ENCODE measurements at regions of chr1 and their contacts with region 1.

Region 1: GRCh38 chr1:156500797-156501499 is 373 bp upstream of the MEF2D start:
- DNase-seq: peak; percentile 93
- H3K4me3 Mint-ChIP-seq: peak overlapping the region; percentile 89
- H3K27ac Mint-ChIP-seq: peak overlapping the region; percentile 97
- H3K4me1 Mint-ChIP-seq: peaks cover 75% of the 10 kb centered on the region
- H3K27me3 Mint-ChIP-seq: no peaks in the 10 kb centered on the region

Region 2: DNA sequence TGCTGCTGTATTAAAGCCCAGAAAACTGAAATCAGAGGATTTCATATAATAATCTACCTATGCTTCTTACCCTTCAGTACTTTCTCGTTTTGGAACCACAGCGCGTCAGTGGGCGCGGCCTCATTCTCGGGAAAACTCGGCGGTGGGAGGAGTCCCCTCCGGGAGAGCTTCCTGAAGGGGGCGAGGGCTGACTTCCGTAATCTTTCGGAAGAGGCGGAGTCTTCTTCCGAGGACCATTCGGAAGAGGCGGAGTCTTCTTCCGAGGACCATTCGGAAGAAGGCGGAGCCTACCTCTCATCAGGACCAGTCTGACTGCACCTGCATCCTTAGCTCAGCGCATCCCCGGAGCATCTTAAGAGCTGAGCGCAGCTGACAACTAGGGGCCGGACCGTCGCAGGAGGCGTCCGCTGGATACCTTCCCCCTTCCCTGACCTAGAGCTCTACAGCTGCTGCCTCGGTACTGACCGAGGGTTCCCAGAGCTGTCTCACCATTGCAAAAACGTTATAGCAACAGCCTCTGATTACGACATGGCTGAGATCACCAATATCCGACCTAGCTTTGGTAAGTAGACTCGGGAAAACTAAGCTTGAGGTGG is 641.6 kb before region 1 on chr1 and contains the start of gene SYT11:
- CTCF ChIA-PET with region 1: no interaction called
- intact Hi-C with region 1: loop called (anchors 5 kb)
- DNase-seq: peak; percentile 98
- H3K4me3 Mint-ChIP-seq: peak within 1 kb of the TSS; percentile 100
- H3K27ac Mint-ChIP-seq: peak within 1 kb of the TSS; percentile 83
- H3K4me1 Mint-ChIP-seq: peaks cover 53% of the 10 kb centered on the region
- H3K27me3 Mint-ChIP-seq: peaks cover 24% of the 10 kb centered on the region
- total RNA-seq, gene SYT11: 6.3 to 7.0 TPM

Region 3: DNA sequence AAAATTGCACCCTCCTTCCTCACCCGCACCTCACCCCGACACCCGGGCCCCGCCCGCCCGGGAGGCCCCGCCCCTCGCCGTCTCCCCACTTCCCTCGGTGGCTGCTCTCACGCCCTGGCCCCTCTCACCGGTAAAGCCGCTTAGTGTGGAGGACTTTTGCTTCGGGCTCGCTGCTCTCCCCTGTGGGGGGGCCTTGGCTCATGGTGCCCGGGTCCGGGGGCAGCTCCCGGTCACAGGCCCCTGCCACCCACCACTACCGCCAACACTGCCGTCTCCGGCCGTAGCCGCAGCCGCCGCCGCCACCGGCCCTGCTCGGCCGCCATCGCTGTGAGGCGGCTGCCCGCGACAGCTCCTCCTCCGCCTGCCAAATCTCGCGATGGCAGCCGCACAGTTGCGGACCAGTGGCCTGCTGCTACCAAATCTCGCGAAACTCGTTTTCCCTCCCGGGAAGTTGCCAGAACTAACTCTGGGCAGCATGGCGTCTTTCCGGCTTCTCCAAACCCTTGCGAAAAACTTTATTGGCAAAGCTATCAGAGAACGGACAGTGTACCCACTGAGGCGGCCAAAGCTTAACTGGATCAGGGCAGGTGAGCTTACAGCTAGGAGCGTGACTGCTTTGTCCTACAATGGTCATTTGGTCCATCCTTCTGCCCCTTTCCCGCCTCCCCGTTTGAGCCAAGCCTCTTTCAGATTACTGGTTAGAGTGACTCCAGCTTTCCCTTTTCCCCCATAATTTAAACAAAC is 218.3 kb before region 1 on chr1 and contains the start of gene SMG5:
- CTCF ChIA-PET with region 1: no interaction called
- intact Hi-C with region 1: loop called (anchors 2 kb)
- DNase-seq: peak; percentile 99
- H3K4me3 Mint-ChIP-seq: peak within 1 kb of the TSS; percentile 99
- H3K27ac Mint-ChIP-seq: peak within 1 kb of the TSS; percentile 92
- H3K4me1 Mint-ChIP-seq: peaks cover 27% of the 10 kb centered on the region
- H3K27me3 Mint-ChIP-seq: no peaks in the 10 kb centered on the region
- total RNA-seq, gene SMG5: 77.1 to 83.4 TPM

Region 4: DNA sequence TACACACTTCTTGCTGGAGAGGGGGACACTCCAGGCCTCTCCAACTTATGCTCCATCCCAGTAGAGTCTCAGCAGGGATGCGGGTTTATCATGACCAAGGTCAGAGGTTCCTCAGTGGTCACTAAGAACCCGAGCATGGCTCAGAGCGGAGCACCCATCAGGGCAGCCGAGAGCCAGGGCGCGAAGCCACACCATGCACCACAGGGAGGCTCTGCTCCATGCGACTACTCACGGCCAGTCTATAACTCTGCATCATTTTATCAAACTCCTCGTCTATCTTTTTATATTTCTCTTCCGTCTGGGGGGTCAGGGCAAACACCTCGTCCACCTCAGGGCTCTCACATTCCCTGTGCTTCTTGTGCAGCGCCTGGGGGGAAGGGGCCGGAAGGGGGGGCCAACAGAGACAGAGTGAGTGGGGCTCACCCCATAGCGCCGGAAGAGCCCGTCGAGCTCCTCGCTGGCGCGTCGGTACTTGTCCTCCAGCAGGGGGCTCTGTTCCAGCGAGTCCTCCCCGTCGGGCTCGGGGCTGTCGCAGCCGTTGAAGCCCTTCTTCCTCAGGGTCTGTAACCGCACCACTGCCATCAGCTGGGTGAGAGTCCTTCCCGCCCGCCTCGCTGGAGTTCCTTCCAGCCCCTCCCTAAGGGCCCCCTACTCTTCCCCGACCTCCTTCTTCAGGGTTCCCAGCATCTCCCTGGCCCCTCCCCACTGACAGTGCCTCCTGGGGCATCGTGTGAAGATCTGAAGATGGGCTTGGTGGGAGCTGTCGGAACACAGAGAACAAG is 20.3 kb before region 1 on chr1:
- CTCF ChIA-PET with region 1: interaction called, 306 read pairs
- intact Hi-C with region 1: loop called (anchors 1 kb)
- DNase-seq: peak; percentile 87
- H3K4me3 Mint-ChIP-seq: peak overlapping the region; percentile 5
- H3K27ac Mint-ChIP-seq: peak overlapping the region; percentile 81
- H3K4me1 Mint-ChIP-seq: peaks cover 54% of the 10 kb centered on the region
- H3K27me3 Mint-ChIP-seq: no peaks in the 10 kb centered on the region

Region 5: GRCh38 chr1:156601122-156601830 is 100.3 kb after region 1 on chr1 and contains the start of gene GPATCH4:
- CTCF ChIA-PET with region 1: interaction called, 4 read pairs
- intact Hi-C with region 1: loop called (anchors 1 kb)
- DNase-seq: peak; percentile 89
- H3K4me3 Mint-ChIP-seq: peak within 1 kb of the TSS; percentile 91
- H3K27ac Mint-ChIP-seq: peak within 1 kb of the TSS; percentile 97
- H3K4me1 Mint-ChIP-seq: peaks cover 47% of the 10 kb centered on the region
- H3K27me3 Mint-ChIP-seq: no peaks in the 10 kb centered on the region
- total RNA-seq, gene GPATCH4: 37.5 to 38.3 TPM

Region 6: GRCh38 chr1:156740679-156741612 is 240.0 kb after region 1 on chr1 and contains the start of gene MRPL24:
- CTCF ChIA-PET with region 1: no interaction called
- intact Hi-C with region 1: loop called (anchors 10 kb)
- DNase-seq: peak; percentile 99
- H3K4me3 Mint-ChIP-seq: peak within 1 kb of the TSS; percentile 98
- H3K27ac Mint-ChIP-seq: peak within 1 kb of the TSS; percentile 98
- H3K4me1 Mint-ChIP-seq: peaks cover 40% of the 10 kb centered on the region
- H3K27me3 Mint-ChIP-seq: no peaks in the 10 kb centered on the region
- total RNA-seq, gene MRPL24: 91.1 to 114 TPM

Region 7: DNA sequence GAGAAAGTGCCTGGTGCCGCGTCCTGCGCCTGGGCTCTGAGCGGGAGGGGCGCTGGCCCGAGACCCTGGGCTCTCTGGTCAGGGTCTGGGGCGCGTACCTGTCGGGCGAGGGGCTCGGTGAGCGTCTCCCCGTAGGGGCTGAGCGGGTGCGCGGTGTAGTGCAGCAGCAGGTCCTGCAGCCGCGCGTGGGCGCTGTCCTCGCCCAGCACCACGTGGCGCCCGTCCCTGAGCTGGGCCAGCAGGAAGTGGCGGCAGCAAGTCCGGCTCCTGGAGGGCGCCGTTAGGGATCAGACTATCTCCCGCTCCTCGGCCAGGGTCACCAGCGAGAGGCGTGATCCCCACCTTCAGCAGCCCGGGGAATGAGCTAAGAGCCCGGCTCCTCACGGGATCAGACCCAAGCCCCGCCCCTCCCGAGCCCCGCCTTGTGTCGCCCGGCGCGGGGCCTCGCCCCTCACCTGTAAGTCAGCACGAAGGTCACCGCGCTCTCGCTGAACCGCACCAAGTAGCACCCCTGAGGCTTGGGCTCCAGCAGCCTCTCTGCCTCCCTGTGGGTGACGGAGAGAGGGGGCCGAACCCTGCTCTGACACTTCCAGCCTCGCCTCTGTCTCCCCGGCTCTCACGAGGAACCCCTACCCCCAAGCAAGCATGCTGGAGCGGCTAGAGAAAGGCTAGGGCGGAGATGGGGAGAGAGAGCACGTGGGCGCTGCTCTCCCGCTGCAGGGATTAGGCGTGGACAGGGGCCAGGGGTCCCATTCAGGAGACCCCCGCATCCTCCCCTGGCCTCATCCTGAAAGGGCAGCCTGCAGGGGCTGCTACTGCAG is 313.0 kb after region 1 on chr1:
- CTCF ChIA-PET with region 1: no interaction called
- intact Hi-C with region 1: loop called (anchors 2 kb)
- DNase-seq: peak; percentile 77
- H3K4me3 Mint-ChIP-seq: peak overlapping the region; percentile 93
- H3K27ac Mint-ChIP-seq: peak overlapping the region; percentile 100
- H3K4me1 Mint-ChIP-seq: peaks cover 62% of the 10 kb centered on the region
- H3K27me3 Mint-ChIP-seq: no peaks in the 10 kb centered on the region

Region 8: DNA sequence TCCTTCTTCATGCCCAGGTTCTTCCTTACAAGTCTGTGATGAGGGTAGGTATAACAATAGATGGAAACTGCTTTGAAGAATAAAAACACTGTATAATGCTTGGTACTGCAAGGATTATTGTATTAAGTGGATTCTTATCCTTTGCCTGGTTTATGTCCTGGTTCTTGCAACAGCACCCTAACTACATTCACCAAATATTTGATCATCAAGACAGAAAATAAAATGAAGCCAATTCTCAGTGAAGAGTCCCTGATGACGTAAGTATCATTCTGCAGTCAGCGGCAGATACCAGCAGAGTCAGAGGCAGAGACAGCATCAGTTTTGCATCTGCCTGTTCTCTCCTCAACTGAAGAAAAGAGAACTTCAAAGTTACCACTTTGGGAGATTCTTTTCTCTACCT is 524.9 kb after region 1 on chr1:
- CTCF ChIA-PET with region 1: no interaction called
- intact Hi-C with region 1: no loop called
- DNase-seq: no peak
- H3K4me3 Mint-ChIP-seq: no peak overlapping the region
- H3K27ac Mint-ChIP-seq: no peak overlapping the region
- H3K4me1 Mint-ChIP-seq: no peaks in the 10 kb centered on the region
- H3K27me3 Mint-ChIP-seq: peaks cover 17% of the 10 kb centered on the region